ENCODE measurements at regions of chr10 and their contacts with region 1.

Region 1: GRCh38 chr10:70221030-70221429 is 12.2 kb downstream of the PPA1 start:
- DNase-seq: no peak
- H3K27ac ChIP-seq: no peak overlapping the region
- CTCF ChIP-seq: no peak

Region 2: GRCh38 chr10:70267161-70267933 is 46.3 kb after region 1 on chr10:
- CTCF ChIA-PET with region 1: interaction called, 10 read pairs
- POLR2A ChIA-PET with region 1: no interaction called
- DNase-seq: peak; percentile 97
- H3K27ac ChIP-seq: peak overlapping the region; percentile 66
- CTCF ChIP-seq: no peak

Region 3: GRCh38 chr10:70381471-70382421 is 160.7 kb after region 1 on chr10:
- CTCF ChIA-PET with region 1: interaction called, 27 read pairs
- POLR2A ChIA-PET with region 1: interaction called, 5 read pairs
- DNase-seq: peak; percentile 48
- H3K27ac ChIP-seq: peak overlapping the region; percentile 82
- CTCF ChIP-seq: no peak

Measured in RWPE1 (cell line).